ENCODE measurements at regions of chr19 and their contacts with region 1.

Region 1: DNA sequence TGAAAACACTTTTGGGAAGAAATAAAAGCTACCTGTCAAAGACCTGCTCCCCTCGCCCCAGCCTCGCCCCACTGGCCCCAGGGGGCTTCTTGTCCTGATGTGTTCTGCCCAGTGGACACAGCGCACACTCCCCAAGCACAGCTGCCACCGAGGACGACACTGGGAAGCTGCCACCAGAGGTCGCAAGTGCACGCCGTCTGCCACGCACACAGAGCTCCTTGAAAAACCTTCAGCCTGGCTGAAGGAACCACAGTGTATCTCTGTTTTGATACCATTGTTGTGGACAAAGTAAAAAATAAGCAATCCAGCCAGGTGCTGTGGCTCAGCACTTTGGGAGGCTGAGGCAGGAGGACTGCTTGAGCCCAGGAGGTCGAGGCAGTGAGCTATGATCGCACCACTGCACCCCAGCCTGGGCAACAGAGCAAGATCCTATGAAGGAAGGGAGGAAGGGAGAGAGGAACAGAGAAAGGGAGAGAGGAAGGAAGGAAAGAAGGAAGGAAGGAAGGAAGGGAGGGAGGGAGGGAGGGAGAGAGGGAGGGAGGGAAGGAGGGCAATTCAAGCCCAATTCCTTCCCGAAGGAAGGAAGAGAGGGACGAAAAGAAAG is 57.3 kb downstream of the CEBPG start:
- DNase-seq: peak; percentile 80
- H3K4me3 Mint-ChIP-seq: no peak overlapping the region
- H3K27ac Mint-ChIP-seq: peak overlapping the region; percentile 52
- H3K4me1 Mint-ChIP-seq: peaks cover 6% of the 10 kb centered on the region
- H3K27me3 Mint-ChIP-seq: no peaks in the 10 kb centered on the region

Region 2: GRCh38 chr19:33325920-33326319 is 104.9 kb before region 1 on chr19:
- CTCF ChIA-PET with region 1: no interaction called
- POLR2A ChIA-PET with region 1: no interaction called
- intact Hi-C with region 1: no loop called
- DNase-seq: no peak
- H3K4me3 Mint-ChIP-seq: no peak overlapping the region
- H3K27ac Mint-ChIP-seq: no peak overlapping the region
- H3K4me1 Mint-ChIP-seq: no peaks in the 10 kb centered on the region
- H3K27me3 Mint-ChIP-seq: peaks cover 10% of the 10 kb centered on the region

Region 3: GRCh38 chr19:33416307-33417215 is 14.2 kb before region 1 on chr19:
- CTCF ChIA-PET with region 1: interaction called, 27 read pairs
- POLR2A ChIA-PET with region 1: no interaction called
- intact Hi-C with region 1: no loop called
- DNase-seq: peak; percentile 79
- H3K4me3 Mint-ChIP-seq: peak overlapping the region; percentile 43
- H3K27ac Mint-ChIP-seq: no peak overlapping the region
- H3K4me1 Mint-ChIP-seq: peaks cover 7% of the 10 kb centered on the region
- H3K27me3 Mint-ChIP-seq: no peaks in the 10 kb centered on the region

Region 4: DNA sequence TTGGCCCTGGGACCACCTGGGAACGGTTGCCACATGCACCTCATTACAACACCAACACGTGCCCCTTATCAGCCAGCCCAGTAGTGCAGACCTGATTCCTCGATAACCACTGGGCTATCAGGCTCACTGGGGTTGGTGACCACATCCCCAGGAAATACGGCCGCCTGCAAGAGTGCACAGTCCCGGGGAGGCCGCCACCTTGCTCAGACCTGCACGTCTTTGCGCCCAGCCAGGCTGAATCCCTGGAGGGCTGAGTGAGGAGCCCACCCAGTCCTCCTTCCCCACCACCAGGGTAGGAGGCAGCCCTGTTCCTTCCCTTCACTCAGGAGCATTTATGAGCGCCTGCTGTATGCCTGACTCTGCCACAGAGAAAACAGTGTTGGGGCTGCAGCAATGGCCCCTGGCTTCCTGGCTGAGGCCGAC is 10.5 kb after region 1 on chr19:
- CTCF ChIA-PET with region 1: interaction called, 10 read pairs
- POLR2A ChIA-PET with region 1: no interaction called
- intact Hi-C with region 1: no loop called
- DNase-seq: no peak
- H3K4me3 Mint-ChIP-seq: no peak overlapping the region
- H3K27ac Mint-ChIP-seq: no peak overlapping the region
- H3K4me1 Mint-ChIP-seq: no peaks in the 10 kb centered on the region
- H3K27me3 Mint-ChIP-seq: no peaks in the 10 kb centered on the region

Region 5: GRCh38 chr19:33450689-33451088 is 19.9 kb after region 1 on chr19:
- CTCF ChIA-PET with region 1: interaction called, 18 read pairs
- POLR2A ChIA-PET with region 1: no interaction called
- intact Hi-C with region 1: no loop called
- DNase-seq: no peak
- H3K4me3 Mint-ChIP-seq: no peak overlapping the region
- H3K27ac Mint-ChIP-seq: no peak overlapping the region
- H3K4me1 Mint-ChIP-seq: no peaks in the 10 kb centered on the region
- H3K27me3 Mint-ChIP-seq: no peaks in the 10 kb centered on the region

Region 6: GRCh38 chr19:33508941-33509614 is 78.3 kb after region 1 on chr19:
- CTCF ChIA-PET with region 1: no interaction called
- POLR2A ChIA-PET with region 1: no interaction called
- intact Hi-C with region 1: no loop called
- DNase-seq: no peak
- H3K4me3 Mint-ChIP-seq: no peak overlapping the region
- H3K27ac Mint-ChIP-seq: no peak overlapping the region
- H3K4me1 Mint-ChIP-seq: no peaks in the 10 kb centered on the region
- H3K27me3 Mint-ChIP-seq: no peaks in the 10 kb centered on the region

Region 7: GRCh38 chr19:33771384-33772101 is 340.8 kb after region 1 on chr19:
- CTCF ChIA-PET with region 1: interaction called, 67 read pairs
- POLR2A ChIA-PET with region 1: no interaction called
- intact Hi-C with region 1: loop called (anchors 1 kb)
- DNase-seq: peak; percentile 78
- H3K4me3 Mint-ChIP-seq: no peak overlapping the region
- H3K27ac Mint-ChIP-seq: no peak overlapping the region
- H3K4me1 Mint-ChIP-seq: no peaks in the 10 kb centered on the region
- H3K27me3 Mint-ChIP-seq: peaks cover 16% of the 10 kb centered on the region